AG04449 (cell line): ENCODE measurements at regions of chr1 and their contacts with region 1.

Region 1: GRCh38 chr1:7042322-7043190 is 257.3 kb downstream of the CAMTA1 start:
- DNase-seq: no peak
- H3K4me3 ChIP-seq: no peak overlapping the region
- CTCF ChIP-seq: peak; percentile 17

Region 2: DNA sequence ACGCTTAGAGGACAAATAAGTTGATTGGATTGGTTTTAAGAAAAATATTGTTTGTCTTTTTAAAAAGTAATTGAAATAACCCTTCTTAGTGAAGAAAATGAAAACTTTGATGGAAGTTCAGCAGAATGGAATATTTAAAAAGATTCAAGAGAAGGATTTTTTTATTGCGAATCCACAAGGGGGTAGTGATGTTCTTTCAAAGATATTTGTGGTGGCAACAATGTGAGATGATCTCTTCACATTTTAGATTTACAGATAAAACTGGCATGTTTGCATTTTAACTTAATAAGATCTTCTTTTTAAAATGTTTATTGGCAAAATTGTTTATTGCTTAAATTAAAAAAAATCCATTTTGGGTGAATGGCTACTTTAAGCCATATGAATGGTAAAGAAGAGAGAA is 248.4 kb before region 1 on chr1:
- CTCF ChIA-PET with region 1: interaction called, 12 read pairs
- POLR2A ChIA-PET with region 1: no interaction called
- DNase-seq: peak; percentile 26
- H3K4me3 ChIP-seq: no peak overlapping the region
- CTCF ChIP-seq: peak; percentile 13

Region 3: DNA sequence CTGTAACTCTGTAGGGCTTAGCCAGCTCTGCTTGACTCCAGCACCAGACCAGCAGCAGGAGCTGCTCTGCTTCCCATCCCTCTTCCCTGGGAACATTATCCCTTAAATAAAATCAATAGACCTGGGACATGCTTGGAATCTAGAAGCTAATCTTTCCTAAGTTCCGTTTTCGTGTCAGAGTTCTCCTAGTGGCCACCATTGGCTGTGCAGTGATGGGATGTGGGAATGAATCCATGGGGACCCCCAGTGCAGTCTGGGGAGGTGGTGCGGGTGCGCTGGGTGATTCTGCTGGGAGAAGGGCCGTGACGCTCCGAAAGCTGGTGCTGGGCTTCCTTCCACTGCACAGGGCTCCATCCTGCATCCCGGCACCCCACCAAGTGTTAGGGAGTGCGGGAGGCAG is 54.6 kb before region 1 on chr1:
- CTCF ChIA-PET with region 1: no interaction called
- POLR2A ChIA-PET with region 1: no interaction called
- DNase-seq: no peak
- H3K4me3 ChIP-seq: no peak overlapping the region
- CTCF ChIP-seq: no peak

Region 4: GRCh38 chr1:7060745-7061144 is 18.2 kb after region 1 on chr1:
- CTCF ChIA-PET with region 1: interaction called, 19 read pairs
- POLR2A ChIA-PET with region 1: no interaction called
- DNase-seq: no peak
- H3K4me3 ChIP-seq: no peak overlapping the region
- CTCF ChIP-seq: no peak

Region 5: DNA sequence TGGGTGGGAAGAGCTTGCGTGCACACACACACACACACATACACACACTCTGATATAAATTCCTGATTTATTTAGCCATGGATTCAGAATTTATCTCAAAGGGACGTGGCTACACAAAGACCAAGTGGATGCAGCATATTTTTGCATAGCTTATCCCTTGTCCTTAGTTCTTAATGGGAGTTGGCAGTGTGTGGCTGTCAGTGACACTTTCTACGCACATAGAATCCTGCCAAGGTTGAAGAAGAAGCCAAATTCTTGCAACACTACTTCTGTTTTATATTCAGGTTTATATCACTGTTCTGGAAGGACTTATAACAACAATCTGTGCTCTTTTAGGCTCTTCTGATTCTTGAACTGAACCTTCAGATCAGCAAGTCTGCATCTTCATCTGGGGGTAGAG is 35.4 kb after region 1 on chr1:
- CTCF ChIA-PET with region 1: interaction called, 39 read pairs
- POLR2A ChIA-PET with region 1: no interaction called
- DNase-seq: no peak
- H3K4me3 ChIP-seq: no peak overlapping the region
- CTCF ChIP-seq: no peak

Region 6: GRCh38 chr1:7207875-7208646 is 165.5 kb after region 1 on chr1:
- CTCF ChIA-PET with region 1: interaction called, 68 read pairs
- POLR2A ChIA-PET with region 1: no interaction called
- DNase-seq: no peak
- H3K4me3 ChIP-seq: no peak overlapping the region
- CTCF ChIP-seq: peak; percentile 71

Region 7: GRCh38 chr1:7646981-7647901 is 604.7 kb after region 1 on chr1:
- CTCF ChIA-PET with region 1: interaction called, 73 read pairs
- POLR2A ChIA-PET with region 1: no interaction called
- DNase-seq: no peak
- H3K4me3 ChIP-seq: no peak overlapping the region
- CTCF ChIP-seq: peak; percentile 90